IMR-90 (cell line): ENCODE measurements at regions of chr22 and their contacts with region 1.

Region 1: DNA sequence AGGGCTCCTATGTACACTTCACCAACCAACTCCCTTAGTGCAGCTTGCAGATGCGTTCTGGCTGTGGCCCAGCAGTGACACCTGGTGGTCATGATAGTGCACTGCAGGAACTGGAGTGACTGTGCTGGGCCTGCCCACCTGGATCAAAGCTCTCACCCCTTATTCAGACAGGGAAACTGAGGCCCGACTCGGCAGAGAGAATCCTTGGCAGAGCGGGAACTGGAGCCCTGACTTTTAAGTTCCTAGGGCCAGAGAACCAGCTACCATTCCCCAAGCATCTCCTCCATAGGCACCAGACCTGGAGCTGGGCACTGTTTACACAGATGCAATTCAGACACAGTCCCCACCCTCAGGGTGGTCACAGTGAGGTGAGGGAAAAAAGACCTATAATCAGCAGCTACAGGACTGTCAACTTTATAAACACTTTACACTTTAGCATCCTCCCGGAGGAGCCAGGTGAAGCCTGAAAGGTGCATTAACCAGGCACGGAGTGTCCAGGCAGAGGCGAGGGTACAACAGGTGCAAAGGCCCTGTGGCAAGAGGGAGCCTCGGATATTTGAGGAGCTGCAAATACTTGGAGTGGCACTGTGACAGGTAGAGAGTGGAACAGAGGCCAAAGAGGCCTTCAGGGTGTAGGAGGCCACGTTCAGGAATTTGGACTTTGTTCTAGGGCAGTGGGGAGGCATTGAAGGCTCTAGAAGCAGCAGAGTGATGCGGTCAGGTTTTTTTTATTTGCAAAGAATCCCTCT is 22.0 kb downstream of the RHBDD3 start:
- DNase-seq: peak; percentile 54
- ATAC-seq: peak; percentile 100
- H3K4me3 ChIP-seq: no peak overlapping the region
- H3K27ac ChIP-seq: no peak overlapping the region
- H3K4me1 ChIP-seq: no peaks in the 10 kb centered on the region
- H3K27me3 ChIP-seq: peaks cover 4% of the 10 kb centered on the region
- CTCF ChIP-seq: peak; percentile 95
- POLR2A ChIP-seq: no peak
- RAD21 ChIP-seq: peak; percentile 96

Region 2: DNA sequence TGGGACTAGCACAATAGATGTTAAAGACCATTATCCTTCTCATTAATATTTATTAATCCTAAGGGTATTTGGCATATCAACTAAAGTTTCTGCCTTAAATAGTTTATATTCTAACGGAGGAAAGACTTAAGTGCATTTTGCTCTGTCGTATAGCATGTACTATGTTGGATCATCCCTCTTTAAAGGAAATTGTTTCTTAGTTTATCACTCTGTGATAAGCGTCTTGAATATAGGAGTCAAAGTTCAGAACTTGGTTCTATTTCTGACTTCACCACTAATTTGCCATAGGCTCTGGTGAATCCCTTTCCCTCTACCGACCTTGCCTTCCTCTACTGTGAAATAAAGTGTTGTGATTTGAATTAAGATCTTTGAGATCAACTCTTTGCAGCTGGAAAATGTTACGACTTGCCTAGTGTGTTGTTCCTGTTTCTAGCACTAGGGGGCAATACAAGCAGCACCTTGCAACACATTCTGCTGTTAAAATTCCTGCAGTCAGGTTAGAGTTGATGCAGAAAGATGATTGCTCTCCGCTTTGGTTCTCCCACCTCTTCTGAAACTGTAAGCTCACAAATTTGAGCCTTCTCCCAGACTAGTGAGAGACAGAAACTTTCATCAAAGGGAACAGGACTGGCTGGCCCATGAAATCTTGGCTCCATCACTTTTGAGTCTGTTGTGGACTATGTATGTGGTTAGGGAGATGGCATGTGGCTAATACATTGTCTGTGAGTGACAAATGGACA is 390.3 kb before region 1 on chr22:
- CTCF ChIA-PET with region 1: no interaction called
- POLR2A ChIA-PET with region 1: no interaction called
- dilution Hi-C with region 1: no loop called
- in situ Hi-C with region 1: loop called (anchors 5 kb)
- intact Hi-C with region 1: loop called (anchors 1 kb)
- DNase-seq: peak; percentile 78
- ATAC-seq: peak; percentile 96
- H3K4me3 ChIP-seq: no peak overlapping the region
- H3K27ac ChIP-seq: no peak overlapping the region
- H3K4me1 ChIP-seq: no peaks in the 10 kb centered on the region
- H3K27me3 ChIP-seq: no peaks in the 10 kb centered on the region
- CTCF ChIP-seq: peak; percentile 88
- POLR2A ChIP-seq: no peak
- RAD21 ChIP-seq: peak; percentile 92

Region 3: DNA sequence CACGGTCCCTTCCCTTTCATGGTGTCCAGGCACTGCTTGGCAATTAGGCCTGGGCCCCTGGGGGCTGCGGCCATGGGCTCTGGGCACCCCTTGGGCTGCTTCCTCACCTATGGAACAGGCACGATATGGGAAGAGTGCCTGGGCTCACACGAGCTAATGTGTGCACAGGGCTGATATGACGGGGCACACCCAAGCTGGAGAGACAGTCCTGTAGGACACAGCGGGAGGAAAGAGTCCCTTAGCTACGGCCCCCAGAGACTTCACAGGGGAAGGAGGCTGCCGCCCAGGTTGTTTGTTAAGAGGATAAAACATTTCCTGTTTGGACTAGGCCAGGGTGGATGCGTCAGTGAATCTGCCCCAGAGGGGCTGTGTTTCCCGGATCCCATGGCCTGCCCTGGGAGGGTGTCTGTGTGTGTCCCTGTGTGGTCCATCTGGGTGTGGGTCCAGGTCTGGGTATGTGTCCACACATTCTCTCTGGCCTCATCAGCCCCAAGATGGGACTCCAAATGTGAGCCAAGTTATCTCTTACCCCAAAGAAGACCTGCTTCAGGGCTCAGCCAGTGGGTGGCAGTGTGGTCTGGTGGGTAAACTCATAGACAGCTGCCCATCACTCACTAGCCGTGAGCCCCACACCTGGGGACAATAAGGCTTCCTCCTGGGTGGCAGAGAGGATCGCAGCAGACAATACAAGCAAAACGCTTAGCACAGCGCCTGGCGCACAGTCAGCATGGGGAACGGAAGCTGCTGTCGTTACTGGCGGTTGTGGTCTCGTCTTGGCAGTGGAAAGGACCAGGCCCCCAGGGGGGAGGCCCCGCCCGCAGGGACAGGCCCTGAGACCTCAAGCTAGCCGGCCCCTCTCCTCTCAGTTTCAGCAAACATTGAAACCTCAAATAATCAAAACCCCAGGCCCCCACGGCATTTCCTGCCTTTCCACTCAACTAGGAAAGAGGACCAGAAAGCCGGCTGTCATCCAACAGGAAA is 43.3 kb before region 1 on chr22:
- CTCF ChIA-PET with region 1: interaction called, 7 read pairs
- POLR2A ChIA-PET with region 1: no interaction called
- dilution Hi-C with region 1: no loop called
- in situ Hi-C with region 1: no loop called
- intact Hi-C with region 1: loop called (anchors 2 kb)
- DNase-seq: peak; percentile 55
- ATAC-seq: peak; percentile 40
- H3K4me3 ChIP-seq: no peak overlapping the region
- H3K27ac ChIP-seq: no peak overlapping the region
- H3K4me1 ChIP-seq: peaks cover 9% of the 10 kb centered on the region; the same call in 1 of the 2 replicates
- H3K27me3 ChIP-seq: peaks cover 13% of the 10 kb centered on the region
- CTCF ChIP-seq: peak; percentile 38
- POLR2A ChIP-seq: no peak
- RAD21 ChIP-seq: no peak; the same call in 1 of the 2 replicates

Region 4: GRCh38 chr22:29291215-29291614 is 45.4 kb after region 1 on chr22:
- CTCF ChIA-PET with region 1: no interaction called
- POLR2A ChIA-PET with region 1: no interaction called
- dilution Hi-C with region 1: no loop called
- in situ Hi-C with region 1: no loop called
- intact Hi-C with region 1: no loop called
- DNase-seq: no peak
- ATAC-seq: no peak
- H3K4me3 ChIP-seq: no peak overlapping the region
- H3K27ac ChIP-seq: no peak overlapping the region
- H3K4me1 ChIP-seq: no peaks in the 10 kb centered on the region
- H3K27me3 ChIP-seq: no peaks in the 10 kb centered on the region
- CTCF ChIP-seq: no peak
- POLR2A ChIP-seq: no peak
- RAD21 ChIP-seq: no peak